Caco-2 (cell line): ENCODE measurements at regions of chr20 and their contacts with region 1.

Region 1: GRCh38 chr20:25574425-25574824 is 10.9 kb downstream of the NINL start:
- DNase-seq: peak; percentile 65 to 71
- H3K4me3 ChIP-seq: no peak overlapping the region
- H3K4me3 Mint-ChIP-seq: no peak overlapping the region
- H3K27ac Mint-ChIP-seq: no peak overlapping the region
- H3K4me1 ChIP-seq: peaks cover 9% of the 10 kb centered on the region; the same call in 1 of the 2 replicates
- H3K4me1 Mint-ChIP-seq: peaks cover 7% of the 10 kb centered on the region
- H3K27me3 ChIP-seq: no peaks in the 10 kb centered on the region
- H3K27me3 Mint-ChIP-seq: no peaks in the 10 kb centered on the region
- CTCF ChIP-seq: peak; percentile 44 to 80

Region 2: GRCh38 chr20:25294459-25295385 is 279.7 kb before region 1 on chr20:
- CTCF ChIA-PET with region 1: no interaction called
- POLR2A ChIA-PET with region 1: interaction called, 4 read pairs
- intact Hi-C with region 1: loop called (anchors 10 kb)
- DNase-seq: peak; percentile 75 to 86
- H3K4me3 ChIP-seq: no peak overlapping the region
- H3K4me3 Mint-ChIP-seq: no peak overlapping the region
- H3K27ac Mint-ChIP-seq: no peak overlapping the region
- H3K4me1 ChIP-seq: no peaks in the 10 kb centered on the region
- H3K4me1 Mint-ChIP-seq: no peaks in the 10 kb centered on the region
- H3K27me3 ChIP-seq: no peaks in the 10 kb centered on the region
- H3K27me3 Mint-ChIP-seq: no peaks in the 10 kb centered on the region
- CTCF ChIP-seq: peak; percentile 92 to 99

Region 3: GRCh38 chr20:25437153-25437581 is 137.3 kb before region 1 on chr20:
- CTCF ChIA-PET with region 1: no interaction called
- POLR2A ChIA-PET with region 1: no interaction called
- intact Hi-C with region 1: loop called (anchors 10 kb)
- DNase-seq: peak; percentile 60 to 62
- H3K4me3 ChIP-seq: no peak overlapping the region
- H3K4me3 Mint-ChIP-seq: peak overlapping the region; percentile 60
- H3K27ac Mint-ChIP-seq: peak overlapping the region; percentile 71
- H3K4me1 ChIP-seq: peaks cover 11% of the 10 kb centered on the region
- H3K4me1 Mint-ChIP-seq: peaks cover 14% of the 10 kb centered on the region
- H3K27me3 ChIP-seq: no peaks in the 10 kb centered on the region
- H3K27me3 Mint-ChIP-seq: no peaks in the 10 kb centered on the region
- CTCF ChIP-seq: no peak

Region 4: GRCh38 chr20:25470045-25470444 is 104.4 kb before region 1 on chr20:
- CTCF ChIA-PET with region 1: interaction called, 7 read pairs
- POLR2A ChIA-PET with region 1: no interaction called
- intact Hi-C with region 1: loop called (anchors 1 kb)
- DNase-seq: peak; percentile 77 to 78
- H3K4me3 ChIP-seq: no peak overlapping the region
- H3K4me3 Mint-ChIP-seq: no peak overlapping the region
- H3K27ac Mint-ChIP-seq: no peak overlapping the region
- H3K4me1 ChIP-seq: peaks cover 4% of the 10 kb centered on the region; the same call in 1 of the 2 replicates
- H3K4me1 Mint-ChIP-seq: no peaks in the 10 kb centered on the region
- H3K27me3 ChIP-seq: no peaks in the 10 kb centered on the region
- H3K27me3 Mint-ChIP-seq: no peaks in the 10 kb centered on the region
- CTCF ChIP-seq: peak; percentile 65 to 75

Region 5: GRCh38 chr20:25549843-25550477 is 24.5 kb before region 1 on chr20:
- CTCF ChIA-PET with region 1: no interaction called
- POLR2A ChIA-PET with region 1: interaction called, 4 read pairs
- intact Hi-C with region 1: loop called (anchors 2 kb)
- DNase-seq: no peak
- H3K4me3 ChIP-seq: no peak overlapping the region; the same call in 1 of the 2 replicates
- H3K4me3 Mint-ChIP-seq: peak overlapping the region; percentile 41
- H3K27ac Mint-ChIP-seq: peak overlapping the region; percentile 90
- H3K4me1 ChIP-seq: peaks cover 56% of the 10 kb centered on the region
- H3K4me1 Mint-ChIP-seq: peaks cover 46% of the 10 kb centered on the region
- H3K27me3 ChIP-seq: no peaks in the 10 kb centered on the region
- H3K27me3 Mint-ChIP-seq: no peaks in the 10 kb centered on the region
- CTCF ChIP-seq: no peak